Activated CD4-positive, alpha-beta T cell treated with anti-CD3 and anti-CD28 coated beads, Interleukin-2, amount 10 ng/mL, durations not matched to agents 24 days and 14 days (primary cell): ENCODE measurements at regions of chr1 and their contacts with region 1.

Region 1: GRCh38 chr1:84478876-84479868 is at the start of gene RPF1:
- DNase-seq: peak; percentile 93
- H3K4me3 Mint-ChIP-seq: peak within 1 kb of the TSS; percentile 96
- H3K27ac Mint-ChIP-seq: peak within 1 kb of the TSS; percentile 97
- H3K4me1 Mint-ChIP-seq: peaks cover 26% of the 10 kb centered on the region
- H3K27me3 Mint-ChIP-seq: peaks cover 20% of the 10 kb centered on the region
- total RNA-seq, gene RPF1: 63.3 and 64.4 TPM in 2 replicates

Region 2: GRCh38 chr1:84214115-84214956 is 264.8 kb before region 1 on chr1:
- intact Hi-C with region 1: no loop called
- DNase-seq: no peak
- H3K4me3 Mint-ChIP-seq: no peak overlapping the region
- H3K27ac Mint-ChIP-seq: no peak overlapping the region
- H3K4me1 Mint-ChIP-seq: peaks cover 2% of the 10 kb centered on the region
- H3K27me3 Mint-ChIP-seq: no peaks in the 10 kb centered on the region

Region 3: DNA sequence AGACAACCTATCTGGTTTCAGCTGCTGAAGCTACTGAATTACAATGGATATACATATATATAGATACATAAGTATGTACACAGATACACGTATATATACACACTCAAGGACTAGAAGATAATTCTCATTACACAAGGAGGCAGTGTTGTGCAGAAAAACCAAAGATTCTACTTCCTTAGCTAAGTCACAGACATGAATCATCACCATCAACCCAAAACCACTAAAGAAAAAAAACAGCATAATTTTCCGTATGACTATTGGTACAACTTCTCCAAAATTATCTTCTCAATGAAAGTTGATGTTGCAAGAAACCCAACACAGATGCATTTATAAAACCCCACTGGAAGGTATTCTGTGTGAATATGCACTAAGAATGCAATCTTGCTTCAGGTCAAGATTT is 36.9 kb before region 1 on chr1:
- intact Hi-C with region 1: loop called (anchors 5 kb)
- DNase-seq: peak; percentile 80
- H3K4me3 Mint-ChIP-seq: peak overlapping the region; percentile 28
- H3K27ac Mint-ChIP-seq: peak overlapping the region; percentile 69
- H3K4me1 Mint-ChIP-seq: peaks cover 16% of the 10 kb centered on the region
- H3K27me3 Mint-ChIP-seq: peaks cover 15% of the 10 kb centered on the region

Region 4: DNA sequence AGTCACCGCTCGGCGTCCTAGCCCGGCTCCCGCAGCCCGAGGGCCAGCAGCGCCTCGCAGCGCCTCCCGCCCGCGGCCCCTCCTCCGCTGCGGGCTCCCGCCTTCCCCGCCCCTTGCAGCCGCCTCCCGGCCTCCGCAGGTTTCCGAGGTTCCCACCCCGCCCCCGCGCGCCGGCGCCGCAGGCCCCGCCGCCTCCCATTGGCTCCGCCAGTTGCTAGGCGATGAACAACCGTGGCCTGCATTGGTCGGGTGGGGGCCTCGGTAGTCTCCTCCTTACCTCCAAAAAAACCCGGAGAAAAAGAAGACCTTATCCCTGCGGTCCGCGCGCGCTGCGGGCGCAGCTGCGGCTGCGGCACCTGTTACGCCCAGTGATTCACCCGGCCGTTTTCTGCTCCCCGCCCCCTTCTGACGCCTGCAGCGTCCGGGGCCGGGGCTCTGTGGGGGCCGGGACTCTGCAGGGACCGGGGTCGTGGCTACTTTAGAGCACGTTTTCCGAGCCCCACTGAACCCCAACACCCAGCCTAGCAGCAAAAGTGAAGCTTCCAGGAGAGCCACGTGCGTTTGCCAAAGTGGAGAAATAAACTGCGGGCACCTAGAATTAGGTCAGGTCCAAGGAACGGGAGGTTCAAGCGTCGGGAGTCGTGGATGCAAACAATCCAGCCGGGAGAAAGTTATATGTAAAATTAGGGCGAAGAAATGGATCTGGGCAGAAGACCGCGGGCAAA is 211.4 kb after region 1 on chr1 and contains the start of gene SSX2IP:
- intact Hi-C with region 1: loop called (anchors 1 kb)
- DNase-seq: peak; percentile 100
- H3K4me3 Mint-ChIP-seq: peak within 1 kb of the TSS; percentile 98
- H3K27ac Mint-ChIP-seq: peak within 1 kb of the TSS; percentile 95
- H3K4me1 Mint-ChIP-seq: peaks cover 43% of the 10 kb centered on the region
- H3K27me3 Mint-ChIP-seq: peaks cover 4% of the 10 kb centered on the region
- total RNA-seq, gene SSX2IP: 10.0 and 11.8 TPM in 2 replicates